AG04450 (cell line): ENCODE measurements at regions of chr1 and their contacts with region 1.

Region 1: GRCh38 chr1:42913426-42914091 is 45.1 kb downstream of the SLC2A1 start:
- DNase-seq: peak; percentile 79
- H3K4me3 ChIP-seq: no peak overlapping the region
- H3K27ac ChIP-seq: no peak overlapping the region
- H3K27me3 ChIP-seq: peaks cover 7% of the 10 kb centered on the region
- CTCF ChIP-seq: peak; percentile 89

Region 2: DNA sequence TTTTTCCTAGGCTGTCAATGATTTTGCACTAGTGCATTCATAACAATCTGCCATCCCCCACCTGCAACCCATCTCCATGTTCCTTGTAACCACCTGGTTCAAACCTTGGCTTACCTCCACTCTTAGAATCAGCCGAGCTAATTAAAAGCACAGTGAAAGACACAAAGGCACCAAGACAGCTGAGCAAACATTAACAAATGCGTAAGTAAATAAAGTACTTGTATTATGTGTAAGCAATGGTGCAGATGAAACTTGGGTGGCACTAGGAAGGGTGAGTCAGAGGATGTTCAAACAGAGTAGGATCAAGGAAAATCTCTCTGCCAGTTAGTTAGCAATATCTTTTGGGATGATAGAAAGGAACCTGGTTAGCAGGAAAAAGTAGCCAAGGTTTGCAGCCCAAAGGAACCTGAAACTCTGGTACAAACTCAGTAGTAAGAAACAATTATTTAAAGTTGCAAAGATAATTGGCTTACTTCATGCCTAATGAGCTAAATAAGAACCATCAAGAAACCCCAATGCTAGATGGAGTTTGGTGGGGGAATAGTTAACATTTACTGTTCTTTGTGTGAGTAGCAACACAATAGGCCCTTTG is 573.4 kb before region 1 on chr1:
- CTCF ChIA-PET with region 1: no interaction called
- POLR2A ChIA-PET with region 1: no interaction called
- DNase-seq: no peak
- H3K4me3 ChIP-seq: no peak overlapping the region
- H3K27ac ChIP-seq: no peak overlapping the region
- H3K27me3 ChIP-seq: no peaks in the 10 kb centered on the region
- CTCF ChIP-seq: no peak

Region 3: GRCh38 chr1:42777852-42778251 is 135.7 kb before region 1 on chr1:
- CTCF ChIA-PET with region 1: interaction called, 34 read pairs
- POLR2A ChIA-PET with region 1: interaction called, 4 read pairs
- DNase-seq: no peak
- H3K4me3 ChIP-seq: no peak overlapping the region
- H3K27ac ChIP-seq: no peak overlapping the region
- H3K27me3 ChIP-seq: no peaks in the 10 kb centered on the region
- CTCF ChIP-seq: peak; percentile 69

Region 4: DNA sequence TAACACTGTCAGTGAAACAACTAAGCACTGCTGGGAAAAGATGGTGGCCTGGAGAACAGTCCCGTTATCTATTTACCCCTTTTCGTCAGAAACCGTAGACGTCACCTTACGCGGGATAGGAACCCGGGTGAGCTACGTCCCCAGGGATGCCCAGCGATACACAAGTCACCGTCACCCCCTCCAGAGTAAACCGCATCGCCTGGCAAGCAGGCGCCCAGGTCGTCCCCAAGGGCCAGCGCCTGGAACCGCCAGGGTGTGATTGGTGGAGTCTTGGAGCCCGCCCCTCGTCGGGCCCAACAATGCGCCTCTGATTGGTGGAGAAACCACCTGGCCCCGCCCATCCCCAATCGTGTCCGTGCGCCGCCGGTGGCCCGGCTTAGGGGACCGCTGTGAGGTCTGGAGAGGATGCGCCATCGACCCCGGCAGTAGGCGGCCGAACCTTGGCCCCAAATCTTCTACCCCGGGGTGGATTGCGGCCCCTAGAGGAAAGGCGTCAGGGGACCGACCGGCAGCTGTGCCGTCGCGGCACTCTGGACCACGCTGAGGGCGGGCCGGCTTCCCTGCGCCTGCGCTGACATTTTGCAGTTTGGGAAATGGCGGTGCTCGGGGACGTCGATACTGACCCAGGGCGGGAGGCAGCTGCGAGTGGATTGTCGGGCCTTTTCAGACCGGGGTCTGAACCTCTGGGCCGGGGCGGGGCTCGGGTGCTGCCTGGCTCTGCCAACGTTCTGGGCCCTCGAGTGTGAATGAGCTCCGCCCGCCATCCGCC is 10.7 kb after region 1 on chr1:
- CTCF ChIA-PET with region 1: interaction called, 32 read pairs
- POLR2A ChIA-PET with region 1: no interaction called
- DNase-seq: peak; percentile 50
- H3K4me3 ChIP-seq: peak overlapping the region; percentile 71
- H3K27ac ChIP-seq: peak overlapping the region; percentile 65
- H3K27me3 ChIP-seq: no peaks in the 10 kb centered on the region
- CTCF ChIP-seq: peak; percentile 23; the same call in 1 of the 2 replicates

Region 5: GRCh38 chr1:43082740-43083139 is 169.2 kb after region 1 on chr1:
- CTCF ChIA-PET with region 1: interaction called, 709 read pairs
- POLR2A ChIA-PET with region 1: no interaction called
- DNase-seq: no peak
- H3K4me3 ChIP-seq: no peak overlapping the region
- H3K27ac ChIP-seq: no peak overlapping the region
- H3K27me3 ChIP-seq: no peaks in the 10 kb centered on the region
- CTCF ChIP-seq: no peak